ENCODE measurements at regions of chr6 and their contacts with region 1.

Region 1: GRCh38 chr6:37169496-37170272 is at the start of gene PIM1:
- DNase-seq: peak; percentile 81 to 99 (median 97)
- ATAC-seq: peak; percentile 68 to 83
- H3K4me3 Mint-ChIP-seq: peak within 1 kb of the TSS; percentile 93 to 99 (median 97)
- H3K27ac Mint-ChIP-seq: peak within 1 kb of the TSS; percentile 87 to 99 (median 96)
- H3K4me1 Mint-ChIP-seq: peaks cover 25 to 53% (median 40%) of the 10 kb centered on the region in 4 donors
- H3K27me3 Mint-ChIP-seq: no peaks in the 10 kb centered on the region
- polyA plus RNA-seq, gene PIM1: 106 to 196 (median 182) TPM

Region 2: DNA sequence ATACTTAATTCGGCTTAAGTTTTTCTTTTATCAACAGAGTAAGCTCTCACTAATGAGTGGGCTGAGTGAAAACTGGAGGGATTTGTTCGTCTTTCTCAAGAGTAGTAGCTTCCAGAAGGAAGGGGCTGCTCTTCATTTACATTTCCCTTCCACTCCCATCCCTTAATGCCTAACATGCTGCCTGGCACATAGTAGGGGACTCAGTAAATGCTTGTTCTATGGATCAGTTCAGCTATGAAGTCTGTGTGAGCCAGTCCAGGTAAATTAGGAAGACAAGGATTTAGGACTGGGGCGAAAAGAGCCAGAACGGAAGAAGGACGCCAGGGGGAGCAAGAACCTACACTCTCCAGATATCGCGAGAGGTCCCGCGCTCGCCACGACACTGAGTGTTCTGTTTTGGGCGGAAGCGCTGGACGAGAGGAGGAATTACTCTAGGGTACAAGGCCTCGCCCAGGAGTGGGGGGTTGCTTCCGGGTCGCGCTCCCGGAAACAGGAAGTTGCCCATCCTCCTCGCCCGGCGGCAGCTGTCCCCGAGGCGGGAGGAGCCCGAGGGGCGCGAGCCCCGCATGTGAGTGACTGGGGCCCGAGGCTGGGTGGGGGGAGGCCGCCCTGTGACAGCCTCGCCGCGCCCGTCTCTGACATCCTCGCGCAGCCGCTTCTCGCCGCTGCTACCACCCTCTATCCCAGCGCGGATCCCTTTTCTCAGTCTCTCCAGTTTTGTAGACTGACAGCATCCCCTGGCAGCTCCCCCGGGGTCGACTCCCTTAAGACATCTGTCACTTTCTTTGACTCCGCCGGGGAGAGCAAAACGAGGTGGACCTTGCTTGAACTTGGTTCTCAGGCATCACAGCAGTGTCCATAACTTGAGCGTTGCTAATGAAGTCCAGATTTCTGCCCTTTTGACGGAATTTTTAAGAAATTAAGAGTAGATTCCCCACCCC is 284.0 kb before region 1 on chr6 and contains the start of gene C6orf89:
- POLR2A ChIA-PET with region 1: interaction called, 17 read pairs
- DNase-seq: peak; percentile 92 to 99 (median 97)
- ATAC-seq: peak; percentile 96 to 98
- H3K4me3 Mint-ChIP-seq: peak within 1 kb of the TSS; percentile 79 to 93 (median 89)
- H3K27ac Mint-ChIP-seq: peak within 1 kb of the TSS; percentile 90 to 98 (median 96)
- H3K4me1 Mint-ChIP-seq: peaks cover 17 to 44% (median 35%) of the 10 kb centered on the region in 4 donors
- H3K27me3 Mint-ChIP-seq: no peaks in the 10 kb centered on the region
- polyA plus RNA-seq, gene C6orf89: 37.4 to 44.4 (median 40.1) TPM

Region 3: DNA sequence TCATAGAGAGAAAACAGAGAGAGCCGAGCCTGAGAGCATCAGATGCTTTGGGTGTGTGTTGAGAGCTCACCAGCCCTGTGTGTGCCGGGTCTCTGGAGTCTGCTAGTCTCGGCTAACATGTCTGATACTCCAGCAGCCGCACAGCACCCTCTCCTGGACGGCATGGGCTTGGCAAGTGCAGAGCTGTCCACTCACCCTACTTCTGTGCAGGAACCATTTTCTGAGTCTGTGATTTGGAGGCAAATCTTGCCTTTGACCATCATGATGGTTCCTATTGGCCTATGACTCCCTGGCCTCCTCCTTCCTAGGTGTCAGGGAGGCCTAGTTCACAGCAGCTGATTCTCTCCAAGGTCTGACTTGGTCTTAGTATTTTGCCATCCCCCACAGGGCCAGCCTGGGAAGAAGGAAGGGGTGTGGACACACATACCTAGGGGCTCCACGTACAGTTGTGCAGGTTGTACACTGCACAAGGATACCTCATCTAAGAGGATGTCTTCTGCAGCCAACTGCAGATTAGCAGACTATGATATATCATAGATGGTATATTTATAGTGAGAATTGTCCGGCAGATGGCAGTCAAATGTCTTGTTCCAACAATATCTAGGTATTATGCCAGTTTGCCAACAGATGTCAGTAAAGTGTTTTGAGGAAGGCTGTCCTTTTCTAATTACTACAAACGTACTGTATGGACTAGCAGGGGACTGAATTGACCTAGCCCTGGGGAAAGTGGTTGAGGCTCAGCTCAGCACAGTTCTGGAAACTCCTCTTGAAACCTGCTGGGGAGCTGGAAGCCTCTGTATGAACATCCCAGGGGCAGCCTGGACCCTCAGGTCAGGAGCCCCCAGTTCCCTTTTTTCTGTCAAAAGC is 151.3 kb before region 1 on chr6:
- POLR2A ChIA-PET with region 1: interaction called, 205 read pairs
- DNase-seq: peak; percentile 68 to 92 (median 82)
- ATAC-seq: peak; percentile 93 to 95
- H3K4me3 Mint-ChIP-seq: no peak overlapping the region
- H3K27ac Mint-ChIP-seq: peak overlapping the region; percentile 17 to 92 (median 76)
- H3K4me1 Mint-ChIP-seq: peaks cover 27 to 47% (median 42%) of the 10 kb centered on the region in 4 donors
- H3K27me3 Mint-ChIP-seq: no peaks in the 10 kb centered on the region

Region 4: GRCh38 chr6:37102279-37103168 is 67.2 kb before region 1 on chr6:
- POLR2A ChIA-PET with region 1: interaction called, 20 read pairs
- DNase-seq: peak; percentile 51 to 90 (median 76)
- ATAC-seq: peak; percentile 91 to 95
- H3K4me3 Mint-ChIP-seq: peak overlapping the region; percentile 60 to 84 (median 77)
- H3K27ac Mint-ChIP-seq: peak overlapping the region; percentile 76 to 96 (median 93)
- H3K4me1 Mint-ChIP-seq: peaks cover 5 to 41% (median 22%) of the 10 kb centered on the region in 4 donors
- H3K27me3 Mint-ChIP-seq: no peaks in the 10 kb centered on the region

Region 5: DNA sequence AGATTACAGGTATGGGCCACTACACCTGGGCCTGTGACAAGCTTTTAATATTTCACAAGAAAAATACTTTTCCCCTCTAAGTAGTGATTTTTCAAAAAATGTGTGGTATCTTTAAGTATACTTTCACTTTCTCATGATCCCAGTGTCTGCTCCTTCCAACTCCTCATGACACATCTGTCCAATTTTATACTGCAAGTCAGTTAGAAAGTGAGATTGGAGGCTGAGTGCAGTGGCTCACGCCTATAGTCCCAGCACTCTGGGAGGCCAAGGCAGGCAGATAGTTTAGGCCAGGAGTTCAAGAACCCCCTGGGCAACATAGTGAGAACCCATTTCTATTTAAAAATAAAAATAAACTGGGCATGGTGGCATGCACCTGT is 20.5 kb after region 1 on chr6:
- POLR2A ChIA-PET with region 1: interaction called, 15 read pairs
- DNase-seq: no peak
- ATAC-seq: no peak
- H3K4me3 Mint-ChIP-seq: peak overlapping the region in 6 of 10 donors; percentile 33 to 66 (median 45)
- H3K27ac Mint-ChIP-seq: peak overlapping the region in 7 of 10 donors; percentile 52 to 81 (median 71)
- H3K4me1 Mint-ChIP-seq: peaks cover 25 to 75% (median 63%) of the 10 kb centered on the region in 4 donors
- H3K27me3 Mint-ChIP-seq: no peaks in the 10 kb centered on the region

Measured in naive thymus-derived CD8-positive, alpha-beta T cell (primary cell).